HepG2 (cell line): ENCODE measurements at regions of chr13 and their contacts with region 1.

Region 1: DNA sequence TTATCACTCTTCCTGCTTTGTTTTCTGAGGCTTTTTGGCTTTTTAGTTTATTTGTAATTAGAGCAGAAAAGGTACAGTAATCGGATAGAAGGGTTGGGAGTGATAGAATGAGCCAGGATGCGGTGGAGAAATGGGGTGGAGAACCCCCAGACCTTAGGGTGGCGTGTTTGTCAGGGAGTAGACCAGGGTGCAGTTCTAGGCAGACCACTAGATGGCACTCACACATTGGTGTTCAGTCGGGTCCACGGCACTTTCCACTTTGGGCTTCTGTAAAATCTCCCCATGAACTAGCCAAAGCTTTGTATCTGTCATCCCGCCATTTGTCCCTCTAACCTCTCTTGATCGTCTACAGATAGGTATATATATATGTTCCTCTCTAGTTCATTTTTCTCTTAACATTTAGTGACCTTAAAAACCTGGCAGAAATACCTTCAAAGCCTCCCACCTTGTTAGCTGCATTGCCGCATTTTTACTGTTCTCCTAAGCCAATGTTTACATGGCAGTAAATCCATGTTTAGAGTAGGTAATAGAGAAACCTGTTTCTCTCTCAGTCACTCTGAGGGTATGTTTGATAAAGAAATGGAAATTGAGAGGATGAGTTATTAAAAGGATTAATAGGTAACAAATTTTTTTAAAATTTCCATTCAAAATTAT is 154.9 kb downstream of the TM9SF2 start:
- DNase-seq: peak; percentile 57
- ATAC-seq: peak; percentile 93
- H3K4me3 ChIP-seq: peak overlapping the region; percentile 46 to 67 (median 48); a peak in 5 of 6 replicates
- H3K27ac ChIP-seq: peak overlapping the region; percentile 38
- H3K4me1 ChIP-seq: peaks cover 21% of the 10 kb centered on the region
- H3K27me3 ChIP-seq: no peaks in the 10 kb centered on the region
- CTCF ChIP-seq: peak; percentile 93
- EP300 ChIP-seq: no peak
- POLR2A ChIP-seq: no peak
- RAD21 ChIP-seq: peak; percentile 83

Region 2: GRCh38 chr13:99916366-99917103 is 260.3 kb after region 1 on chr13:
- CTCF ChIA-PET with region 1: interaction called, 4 read pairs
- POLR2A ChIA-PET with region 1: no interaction called
- in situ Hi-C with region 1: no loop called
- intact Hi-C with region 1: loop called (anchors 1 kb)
- DNase-seq: peak; percentile 76
- ATAC-seq: peak; percentile 93
- H3K4me3 ChIP-seq: no peak overlapping the region
- H3K27ac ChIP-seq: no peak overlapping the region
- H3K4me1 ChIP-seq: peaks cover 14% of the 10 kb centered on the region
- H3K27me3 ChIP-seq: peaks cover 0 to 12% of the 10 kb centered on the region in 2 experiments; a peak in 4 of 5 replicates
- CTCF ChIP-seq: peak; percentile 90
- EP300 ChIP-seq: 0 out of 4 replicates have a peak, but pooled peaks of 1 of the 2 experiments have one; percentile 15
- POLR2A ChIP-seq: no peak
- RAD21 ChIP-seq: peak; percentile 79; the same call in 1 of the 2 replicates

Region 3: DNA sequence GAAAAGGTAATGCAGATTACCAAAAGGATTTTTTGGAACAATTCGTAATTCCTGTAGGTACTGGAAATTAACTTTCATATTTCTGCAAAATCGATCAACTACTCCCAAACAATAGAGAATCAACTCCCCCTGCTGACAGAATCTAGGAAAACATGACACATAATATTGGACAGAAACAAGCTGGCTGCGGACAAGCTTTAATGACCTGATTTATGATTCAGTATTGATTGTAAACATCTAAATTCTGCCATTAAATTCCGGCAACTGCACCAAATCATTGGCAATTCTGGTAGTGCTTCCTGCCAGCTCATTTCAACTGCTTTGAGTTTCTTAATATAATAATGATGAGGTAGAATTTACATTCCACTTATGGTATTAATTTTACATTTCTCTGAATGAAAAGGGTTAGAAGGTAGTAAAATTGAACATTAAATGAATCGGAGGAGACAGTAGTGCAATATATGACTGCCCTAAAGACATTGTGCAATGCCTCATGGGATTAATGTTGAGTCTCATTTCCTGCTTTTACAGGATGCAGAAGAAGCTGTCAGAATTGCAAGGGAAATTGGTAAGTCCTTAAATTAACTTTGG is 579.2 kb after region 1 on chr13:
- CTCF ChIA-PET with region 1: interaction called, 3 read pairs
- POLR2A ChIA-PET with region 1: no interaction called
- in situ Hi-C with region 1: loop called (anchors 25 kb)
- intact Hi-C with region 1: loop called (anchors 2 kb)
- DNase-seq: peak; percentile 60
- ATAC-seq: no peak
- H3K4me3 ChIP-seq: peak overlapping the region in 1 of 3 experiments; percentile 2; a peak in 1 of 6 replicates
- H3K27ac ChIP-seq: no peak overlapping the region
- H3K4me1 ChIP-seq: peaks cover 53% of the 10 kb centered on the region
- H3K27me3 ChIP-seq: no peaks in the 10 kb centered on the region; a peak in 1 of 5 replicates
- CTCF ChIP-seq: peak; percentile 67
- EP300 ChIP-seq: no peak
- POLR2A ChIP-seq: no peak
- RAD21 ChIP-seq: peak; percentile 73

Region 4: GRCh38 chr13:100542826-100543156 is 886.6 kb after region 1 on chr13:
- CTCF ChIA-PET with region 1: no interaction called
- POLR2A ChIA-PET with region 1: no interaction called
- in situ Hi-C with region 1: loop called (anchors 25 kb)
- intact Hi-C with region 1: loop called (anchors 1 kb)
- DNase-seq: peak; percentile 35
- ATAC-seq: no peak
- H3K4me3 ChIP-seq: no peak overlapping the region
- H3K27ac ChIP-seq: no peak overlapping the region
- H3K4me1 ChIP-seq: peaks cover 58% of the 10 kb centered on the region
- H3K27me3 ChIP-seq: no peaks in the 10 kb centered on the region
- CTCF ChIP-seq: peak; percentile 15; the same call in 1 of the 2 replicates
- EP300 ChIP-seq: no peak
- POLR2A ChIP-seq: no peak
- RAD21 ChIP-seq: no peak